ENCODE measurements at regions of chrX and their contacts with region 1.

Region 1: DNA sequence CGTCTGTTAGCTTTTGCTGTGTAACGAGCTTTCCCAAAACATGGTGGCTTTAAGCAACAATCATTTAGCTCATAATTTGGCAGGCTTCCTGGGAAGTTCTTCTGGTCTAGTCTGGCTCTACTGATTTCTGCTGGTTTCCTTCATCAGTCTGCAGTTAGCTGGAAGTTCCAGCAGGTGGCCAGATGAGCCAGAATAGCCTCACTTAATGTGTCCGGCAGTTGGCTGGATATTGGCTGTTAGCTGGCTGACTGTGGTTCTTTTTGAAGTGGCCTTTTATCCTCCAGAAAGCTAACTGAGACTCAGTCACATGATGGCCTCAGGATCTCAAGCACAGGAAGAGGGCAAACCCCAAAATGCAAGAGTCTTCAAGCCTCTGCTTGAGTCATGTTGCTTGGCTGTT is 34.9 kb downstream of the FTHL17 start:
- DNase-seq: no peak
- H3K4me3 Mint-ChIP-seq: no peak overlapping the region
- H3K27ac Mint-ChIP-seq: no peak overlapping the region
- H3K4me1 Mint-ChIP-seq: peaks cover 5% of the 10 kb centered on the region
- H3K27me3 Mint-ChIP-seq: peaks cover 10% of the 10 kb centered on the region

Region 2: GRCh38 chrX:30971774-30972603 is 64.9 kb before region 1 on chrX:
- intact Hi-C with region 1: loop called (anchors 10 kb)
- DNase-seq: peak; percentile 8
- H3K4me3 Mint-ChIP-seq: peak overlapping the region; percentile 78
- H3K27ac Mint-ChIP-seq: peak overlapping the region; percentile 80
- H3K4me1 Mint-ChIP-seq: peaks cover 15% of the 10 kb centered on the region
- H3K27me3 Mint-ChIP-seq: peaks cover 14% of the 10 kb centered on the region

Region 3: DNA sequence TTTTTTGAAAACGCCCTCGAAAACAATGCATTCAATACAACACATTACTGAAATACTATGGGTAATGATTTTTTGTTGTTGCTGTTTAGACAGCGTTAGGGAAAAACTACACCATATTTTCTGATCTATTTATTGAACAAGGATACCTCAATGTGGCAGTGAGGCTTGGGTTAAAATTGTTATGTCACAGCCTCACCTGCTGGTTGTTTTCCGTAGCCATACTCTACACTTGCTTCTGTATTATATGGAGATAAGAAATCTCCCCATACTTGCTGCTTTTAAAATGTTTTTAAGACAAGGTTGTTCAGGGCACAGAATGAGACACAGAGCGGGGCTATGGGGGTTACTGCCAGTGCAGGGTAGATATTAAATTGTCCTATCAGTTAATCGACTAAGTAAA is 256.5 kb after region 1 on chrX:
- intact Hi-C with region 1: loop called (anchors 5 kb)
- DNase-seq: no peak
- H3K4me3 Mint-ChIP-seq: no peak overlapping the region
- H3K27ac Mint-ChIP-seq: no peak overlapping the region
- H3K4me1 Mint-ChIP-seq: no peaks in the 10 kb centered on the region
- H3K27me3 Mint-ChIP-seq: no peaks in the 10 kb centered on the region

Region 4: GRCh38 chrX:31423609-31424189 is 386.8 kb after region 1 on chrX:
- intact Hi-C with region 1: loop called (anchors 2 kb)
- DNase-seq: no peak
- H3K4me3 Mint-ChIP-seq: no peak overlapping the region
- H3K27ac Mint-ChIP-seq: no peak overlapping the region
- H3K4me1 Mint-ChIP-seq: no peaks in the 10 kb centered on the region
- H3K27me3 Mint-ChIP-seq: no peaks in the 10 kb centered on the region

Measured in activated T-helper 2 cell treated with anti-CD3 and anti-CD28 coated beads, Interferon-gamma antibody, Interleukin-2, Interleukin-4, amounts not matched to agents 10 μg/mL and 5 μg/mL and 100 μg/mL, durations not matched to agents 14 hours and 24 hours and 36 hours (primary cell).